CD14-positive monocyte (primary cell): ENCODE measurements at regions of chr11 and their contacts with region 1.

Region 1: DNA sequence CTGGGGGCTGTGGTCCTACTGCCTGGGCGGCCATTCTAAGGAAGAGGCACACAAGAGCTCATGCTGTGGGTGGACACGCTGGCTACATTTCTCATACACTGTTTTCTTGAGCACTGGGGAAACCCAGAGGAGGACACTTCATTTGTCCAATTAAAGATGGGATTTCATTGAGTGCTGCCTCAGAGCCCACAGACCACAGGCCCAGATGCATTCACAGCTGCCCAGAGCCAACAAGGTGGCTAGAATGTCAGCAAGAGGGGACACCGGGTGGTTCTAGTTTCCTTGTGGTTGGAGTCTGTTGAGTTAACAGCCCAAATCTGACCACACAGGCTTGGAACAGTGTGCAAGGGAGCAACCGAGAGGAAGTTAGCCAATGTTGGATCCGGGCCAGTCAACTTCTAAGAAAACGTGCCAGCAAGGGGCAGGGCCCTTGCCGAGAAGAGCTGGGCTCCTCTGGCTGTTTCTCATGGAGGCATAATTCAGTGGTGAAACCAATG is 35.0 kb upstream of the SORL1 start:
- DNase-seq: peak; percentile 92 to 98 (median 93)
- H3K4me3 ChIP-seq: peak overlapping the region in 1 of 3 experiments; percentile 49
- H3K4me3 Mint-ChIP-seq: peak overlapping the region; percentile 41 to 71
- H3K27ac ChIP-seq: peak overlapping the region; percentile 86 to 90
- H3K27ac Mint-ChIP-seq: peak overlapping the region; percentile 96 to 99 (median 97)
- H3K4me1 ChIP-seq: peaks cover 70 to 74% of the 10 kb centered on the region in 2 donors
- H3K4me1 Mint-ChIP-seq: peaks cover 85% of the 10 kb centered on the region
- H3K27me3 ChIP-seq: no peaks in the 10 kb centered on the region
- H3K27me3 Mint-ChIP-seq: peaks cover 0 to 6% (median 0%) of the 10 kb centered on the region in 3 donors
- CTCF ChIP-seq: no peak

Region 2: GRCh38 chr11:121575250-121575962 is 158.3 kb after region 1 on chr11:
- intact Hi-C with region 1: loop called (anchors 2 to 5 kb)
- DNase-seq: peak; percentile 97 to 99 (median 99)
- H3K4me3 ChIP-seq: no peak overlapping the region
- H3K4me3 Mint-ChIP-seq: peak overlapping the region in 1 of 2 donors; percentile 48
- H3K27ac ChIP-seq: peak overlapping the region; percentile 7 to 76
- H3K27ac Mint-ChIP-seq: peak overlapping the region; percentile 81 to 96 (median 86)
- H3K4me1 ChIP-seq: peaks cover 47 to 52% of the 10 kb centered on the region in 2 donors
- H3K4me1 Mint-ChIP-seq: peaks cover 66% of the 10 kb centered on the region
- H3K27me3 ChIP-seq: no peaks in the 10 kb centered on the region
- H3K27me3 Mint-ChIP-seq: peaks cover 0 to 2% (median 0%) of the 10 kb centered on the region in 3 donors
- CTCF ChIP-seq: no peak